A673 (cell line): ENCODE measurements at regions of chr7 and their contacts with region 1.

Region 1: GRCh38 chr7:28062197-28062991 is 118.2 kb downstream of the JAZF1 start:
- DNase-seq: peak; percentile 63
- H3K4me3 ChIP-seq: no peak overlapping the region
- H3K27ac ChIP-seq: no peak overlapping the region
- H3K4me1 ChIP-seq: no peaks in the 10 kb centered on the region
- H3K27me3 ChIP-seq: peaks cover 50% of the 10 kb centered on the region
- CTCF ChIP-seq: peak; percentile 84

Region 2: GRCh38 chr7:28078036-28078901 is 15.9 kb after region 1 on chr7:
- CTCF ChIA-PET with region 1: interaction called, 14 read pairs
- POLR2A ChIA-PET with region 1: no interaction called
- intact Hi-C with region 1: no loop called
- DNase-seq: peak; percentile 58
- H3K4me3 ChIP-seq: no peak overlapping the region
- H3K27ac ChIP-seq: no peak overlapping the region
- H3K4me1 ChIP-seq: no peaks in the 10 kb centered on the region
- H3K27me3 ChIP-seq: peaks cover 33% of the 10 kb centered on the region
- CTCF ChIP-seq: peak; percentile 96

Region 3: GRCh38 chr7:28125431-28126409 is 63.3 kb after region 1 on chr7:
- CTCF ChIA-PET with region 1: no interaction called
- POLR2A ChIA-PET with region 1: no interaction called
- intact Hi-C with region 1: no loop called
- DNase-seq: no peak
- H3K4me3 ChIP-seq: no peak overlapping the region
- H3K27ac ChIP-seq: no peak overlapping the region
- H3K4me1 ChIP-seq: no peaks in the 10 kb centered on the region
- H3K27me3 ChIP-seq: no peaks in the 10 kb centered on the region
- CTCF ChIP-seq: no peak